ENCODE measurements at regions of chr11 and their contacts with region 1.

Region 1: GRCh38 chr11:17730608-17731462 is 3.7 kb upstream of the KCNC1 start:
- DNase-seq: peak; percentile 57
- ATAC-seq: peak; percentile 91
- H3K4me3 ChIP-seq: no peak overlapping the region
- H3K27ac ChIP-seq: no peak overlapping the region
- H3K4me1 ChIP-seq: 0 out of 2 replicates have a peak, but pooled peaks cover 2% of the 10 kb centered on the region
- H3K27me3 ChIP-seq: peaks cover 6% of the 10 kb centered on the region
- CTCF ChIP-seq: peak; percentile 89

Region 2: DNA sequence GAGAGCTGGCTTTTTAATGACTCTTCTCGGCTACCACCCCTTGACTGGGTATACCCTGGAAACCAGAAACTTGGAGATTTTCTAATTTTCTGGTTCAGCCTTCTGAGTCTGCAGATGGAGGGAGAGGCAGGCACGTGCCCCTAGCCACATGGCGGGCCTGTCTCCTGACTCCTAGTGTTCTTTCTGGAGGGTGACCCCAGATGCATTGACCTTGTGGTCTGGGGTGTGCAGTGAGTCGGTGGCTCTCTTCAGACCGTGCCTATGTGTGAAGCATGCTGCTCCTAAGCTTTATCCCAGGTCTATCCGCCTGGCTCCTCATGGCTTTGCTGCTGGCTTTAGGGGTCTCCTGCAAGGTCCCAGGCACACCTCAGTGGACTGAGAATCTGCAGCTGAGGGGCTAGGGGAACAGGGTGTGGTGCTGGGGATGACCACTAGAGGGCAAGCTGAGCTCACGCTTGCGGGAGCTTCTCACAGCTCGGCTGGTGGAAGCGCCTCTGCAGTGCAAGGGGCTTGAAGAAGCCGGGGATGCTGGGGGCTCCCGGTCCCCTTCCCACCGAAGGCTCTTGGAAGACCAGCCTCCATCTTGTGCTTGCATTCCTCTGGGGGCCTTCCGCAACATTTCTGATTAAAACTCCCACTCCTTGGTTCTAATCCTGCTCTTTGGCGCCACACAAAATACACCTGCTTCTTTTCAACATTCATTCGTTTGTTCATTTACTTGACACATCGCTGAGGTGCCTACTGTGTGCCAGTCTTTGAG is 132.0 kb before region 1 on chr11:
- CTCF ChIA-PET with region 1: interaction called, 31 read pairs
- POLR2A ChIA-PET with region 1: no interaction called
- in situ Hi-C with region 1: no loop called
- intact Hi-C with region 1: loop called (anchors 2 kb)
- DNase-seq: peak; percentile 55
- ATAC-seq: peak; percentile 92
- H3K4me3 ChIP-seq: no peak overlapping the region
- H3K27ac ChIP-seq: no peak overlapping the region
- H3K4me1 ChIP-seq: no peaks in the 10 kb centered on the region
- H3K27me3 ChIP-seq: no peaks in the 10 kb centered on the region
- CTCF ChIP-seq: peak; percentile 96

Region 3: GRCh38 chr11:17683378-17684161 is 47.3 kb before region 1 on chr11:
- CTCF ChIA-PET with region 1: no interaction called
- POLR2A ChIA-PET with region 1: no interaction called
- in situ Hi-C with region 1: no loop called
- intact Hi-C with region 1: loop called (anchors 5 kb)
- DNase-seq: no peak
- ATAC-seq: peak; percentile 88
- H3K4me3 ChIP-seq: no peak overlapping the region
- H3K27ac ChIP-seq: peak overlapping the region; percentile 24; the same call in 1 of the 2 replicates
- H3K4me1 ChIP-seq: peaks cover 10% of the 10 kb centered on the region
- H3K27me3 ChIP-seq: no peaks in the 10 kb centered on the region
- CTCF ChIP-seq: no peak

Region 4: GRCh38 chr11:17978553-17979287 is 247.9 kb after region 1 on chr11:
- CTCF ChIA-PET with region 1: interaction called, 59 read pairs
- POLR2A ChIA-PET with region 1: no interaction called
- in situ Hi-C with region 1: no loop called
- intact Hi-C with region 1: loop called (anchors 1 kb)
- DNase-seq: peak; percentile 22
- ATAC-seq: peak; percentile 90
- H3K4me3 ChIP-seq: no peak overlapping the region
- H3K27ac ChIP-seq: no peak overlapping the region
- H3K4me1 ChIP-seq: no peaks in the 10 kb centered on the region
- H3K27me3 ChIP-seq: no peaks in the 10 kb centered on the region
- CTCF ChIP-seq: peak; percentile 87